Posterior cingulate gyrus (tissue), 11 donors: ENCODE measurements at regions of chr15 and their contacts with region 1.

Region 1: GRCh38 chr15:60916679-60917460 is 312.2 kb downstream of the RORA start:
- DNase-seq: peak; percentile 69 to 97 (median 84)

Region 2: GRCh38 chr15:60507596-60508424 is 409.1 kb before region 1 on chr15:
- intact Hi-C with region 1: loop called (anchors 5 kb)
- DNase-seq: peak in 3 of 10 donors; percentile 13 to 31 (median 23)

Region 3: GRCh38 chr15:60557191-60557618 is 359.7 kb before region 1 on chr15:
- intact Hi-C with region 1: no loop called
- DNase-seq: no peak

Region 4: GRCh38 chr15:60585743-60586708 is 330.8 kb before region 1 on chr15:
- intact Hi-C with region 1: loop called (anchors 1 kb)
- DNase-seq: peak in 5 of 10 donors; percentile 42 to 85 (median 50)